ENCODE measurements at regions of chr19 and their contacts with region 1.

Region 1: GRCh38 chr19:19489804-19490655 is 25.3 kb downstream of the TSSK6 start:
- DNase-seq: no peak
- H3K4me3 ChIP-seq: peak overlapping the region in 2 of 4 donors; percentile 17 to 22
- H3K27ac ChIP-seq: peak overlapping the region; percentile 62 to 87 (median 73)
- H3K4me1 ChIP-seq: peaks cover 37 to 59% (median 43%) of the 10 kb centered on the region in 3 donors
- H3K27me3 ChIP-seq: no peaks in the 10 kb centered on the region
- CTCF ChIP-seq: peak; percentile 77 to 93 (median 82)
- POLR2A ChIP-seq: no peak

Region 2: DNA sequence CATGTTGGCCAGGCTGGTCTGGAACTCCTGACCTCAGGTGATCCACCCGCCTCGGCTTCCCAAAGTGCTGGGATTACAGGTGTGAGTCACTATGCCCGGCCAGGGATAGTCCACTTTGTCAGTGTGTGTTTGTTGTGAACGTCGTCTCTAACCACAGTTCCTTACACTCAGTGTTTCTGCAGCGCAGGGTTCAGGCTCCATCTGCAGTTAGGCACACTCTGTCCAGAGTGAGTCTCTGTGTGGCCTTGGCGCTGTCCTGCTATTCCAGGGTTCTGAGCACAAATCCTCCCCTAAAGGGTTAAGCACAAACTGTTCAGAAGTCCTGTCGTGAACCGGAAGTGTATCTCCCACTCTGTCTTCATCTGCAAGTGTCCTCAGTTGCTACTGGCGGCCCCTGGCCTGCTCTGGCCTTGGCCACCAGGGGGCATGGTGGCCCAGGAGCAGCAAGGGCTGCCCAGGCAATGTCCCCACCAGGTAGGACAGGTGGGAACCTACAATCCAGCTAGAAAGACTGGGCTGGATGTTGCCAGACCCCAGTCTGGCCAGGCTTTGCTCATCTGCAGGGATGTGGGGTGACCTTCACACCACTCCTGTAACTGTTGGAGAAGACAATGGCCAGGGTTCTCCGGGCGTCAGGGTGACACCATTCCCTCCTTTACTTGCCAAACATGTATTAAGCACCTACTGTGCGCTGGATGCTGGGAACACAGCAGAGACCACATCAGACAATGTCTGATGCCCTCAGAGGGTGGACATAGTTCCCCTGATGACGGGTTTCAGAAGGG is 123.2 kb before region 1 on chr19:
- intact Hi-C with region 1: loop called (anchors 5 kb)
- DNase-seq: no peak
- H3K4me3 ChIP-seq: peak overlapping the region in 1 of 4 donors; percentile 5
- H3K27ac ChIP-seq: peak overlapping the region; percentile 27 to 57 (median 49)
- H3K4me1 ChIP-seq: peaks cover 7 to 30% (median 18%) of the 10 kb centered on the region in 3 donors
- H3K27me3 ChIP-seq: no peaks in the 10 kb centered on the region
- CTCF ChIP-seq: peak; percentile 92 to 98 (median 96)
- POLR2A ChIP-seq: no peak

Measured in esophagus squamous epithelium (tissue), 5 donors.